ENCODE measurements at regions of chr20 and their contacts with region 1.

Region 1: DNA sequence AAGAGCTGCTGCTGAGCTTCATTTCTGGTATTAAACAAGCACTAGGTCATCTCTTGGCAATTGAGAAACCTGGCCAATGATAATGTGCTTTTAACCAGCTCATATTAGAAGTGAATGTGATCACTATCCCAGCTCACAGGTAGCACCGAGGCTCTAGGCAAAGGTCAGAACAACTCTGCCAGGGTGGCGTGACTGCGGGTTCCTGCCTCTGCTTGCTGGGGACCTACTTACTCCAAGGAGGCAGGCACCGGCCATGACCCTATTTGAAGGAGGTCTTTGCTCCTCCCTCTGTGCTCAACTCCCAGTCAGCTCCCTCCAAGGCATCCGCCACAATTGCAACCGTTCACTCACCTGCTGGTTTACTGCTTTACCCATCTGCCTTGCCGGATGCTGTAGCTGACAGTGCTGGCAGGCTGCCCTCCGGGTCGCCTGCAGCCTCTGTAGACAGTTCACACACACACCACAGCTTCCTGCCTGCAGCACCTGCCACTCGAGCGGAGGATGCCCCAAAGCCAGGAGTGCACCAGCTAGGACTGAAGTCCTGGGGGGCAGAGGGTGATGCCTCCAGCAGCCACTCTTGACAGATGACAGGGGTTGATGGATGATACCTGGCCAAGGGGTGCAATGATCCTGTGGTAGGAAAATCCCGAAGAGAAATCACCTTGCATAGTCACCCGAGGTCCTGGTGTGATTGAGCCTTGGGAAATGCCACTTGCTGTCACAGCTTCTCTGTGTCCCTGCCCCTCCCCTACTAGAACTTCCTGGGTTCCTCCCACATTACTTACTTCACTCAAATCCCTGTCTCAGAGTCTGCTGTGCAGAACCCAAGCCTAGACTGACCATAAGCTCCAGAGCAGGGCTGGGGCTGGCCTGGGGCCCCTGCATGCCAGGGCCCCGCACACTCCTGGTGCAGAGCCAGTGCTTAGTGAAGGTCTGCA is 8.8 kb upstream of the VSX1 start:
- DNase-seq: no peak
- ATAC-seq: peak in 2 of 8 donors; percentile 13 to 55
- H3K4me3 ChIP-seq: no peak overlapping the region
- H3K27ac ChIP-seq: no peak overlapping the region
- H3K4me1 ChIP-seq: no peaks in the 10 kb centered on the region
- H3K27me3 ChIP-seq: peaks cover under 1 to 56% (median 26%) of the 10 kb centered on the region in 7 donors
- CTCF ChIP-seq: no peak

Region 2: GRCh38 chr20:25145131-25145530 is 54.4 kb after region 1 on chr20:
- intact Hi-C with region 1: loop called in 1 of 10 experiments (anchors 5 kb)
- DNase-seq: peak in 1 of 2 donors; percentile 34
- ATAC-seq: peak in 6 of 8 donors; percentile 28 to 78 (median 42)
- H3K4me3 ChIP-seq: no peak overlapping the region
- H3K27ac ChIP-seq: no peak overlapping the region
- H3K4me1 ChIP-seq: peaks cover 4 to 12% (median 8%) of the 10 kb centered on the region in 9 donors
- H3K27me3 ChIP-seq: peaks cover 4 to 60% (median 39%) of the 10 kb centered on the region in 7 donors
- CTCF ChIP-seq: no peak